Spleen (tissue), 13 donors: ENCODE measurements at regions of chr11 and their contacts with region 1.

Region 1: DNA sequence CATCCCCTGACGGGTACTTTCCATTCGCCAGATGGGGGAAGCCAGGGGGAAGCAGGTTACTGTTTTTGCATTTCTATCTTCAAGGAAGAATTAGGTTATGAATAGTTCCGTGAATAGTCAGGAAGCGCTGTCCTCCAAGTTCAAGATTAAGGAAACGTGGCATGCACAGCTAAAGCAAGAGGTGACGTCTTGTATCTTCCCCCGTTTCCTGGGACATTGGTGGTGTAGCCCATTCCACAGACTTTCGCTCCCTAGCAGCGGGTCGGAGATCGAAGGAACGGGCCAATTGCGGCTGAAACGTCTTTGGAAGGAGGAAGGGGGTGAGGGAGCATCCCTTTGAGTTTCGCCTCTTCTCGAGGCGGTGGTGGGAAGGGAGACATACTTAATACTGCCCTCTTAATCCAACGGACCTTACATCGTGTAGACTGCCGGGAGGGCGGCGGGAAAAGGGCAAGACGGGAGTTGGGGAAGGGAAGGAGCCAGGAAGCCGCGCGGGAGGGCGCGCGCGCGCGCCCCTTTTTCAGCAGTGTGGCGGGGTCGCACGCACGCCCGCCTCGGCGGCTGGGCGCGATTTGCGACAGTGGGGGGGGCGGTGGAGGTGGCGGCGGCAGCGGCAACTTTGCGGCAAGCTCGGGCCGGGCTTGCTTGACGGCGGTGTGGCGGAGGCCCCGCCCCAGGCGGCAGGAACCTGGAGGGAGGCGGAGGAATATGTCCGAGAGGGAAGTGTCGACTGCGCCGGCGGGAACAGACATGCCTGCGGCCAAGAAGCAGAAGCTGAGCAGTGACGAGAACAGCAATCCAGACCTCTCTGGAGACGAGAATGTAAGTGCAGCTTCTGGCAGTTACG is at the start of gene EED:
- DNase-seq: peak; percentile 99
- H3K4me3 ChIP-seq: peak within 1 kb of the TSS; percentile 69 to 90 (median 83)
- H3K27ac ChIP-seq: peak within 1 kb of the TSS; percentile 91 to 100 (median 98)
- H3K4me1 ChIP-seq: peaks cover 28 to 56% (median 51%) of the 10 kb centered on the region in 6 donors
- H3K27me3 ChIP-seq: no peaks in the 10 kb centered on the region
- CTCF ChIP-seq: peak in 2 of 11 experiments; percentile 18 to 28
- POLR2A ChIP-seq: peak in 1 of 3 donors; percentile 45
- total RNA-seq, gene EED: 25.8 to 48.1 (median 34.0) TPM

Region 2: DNA sequence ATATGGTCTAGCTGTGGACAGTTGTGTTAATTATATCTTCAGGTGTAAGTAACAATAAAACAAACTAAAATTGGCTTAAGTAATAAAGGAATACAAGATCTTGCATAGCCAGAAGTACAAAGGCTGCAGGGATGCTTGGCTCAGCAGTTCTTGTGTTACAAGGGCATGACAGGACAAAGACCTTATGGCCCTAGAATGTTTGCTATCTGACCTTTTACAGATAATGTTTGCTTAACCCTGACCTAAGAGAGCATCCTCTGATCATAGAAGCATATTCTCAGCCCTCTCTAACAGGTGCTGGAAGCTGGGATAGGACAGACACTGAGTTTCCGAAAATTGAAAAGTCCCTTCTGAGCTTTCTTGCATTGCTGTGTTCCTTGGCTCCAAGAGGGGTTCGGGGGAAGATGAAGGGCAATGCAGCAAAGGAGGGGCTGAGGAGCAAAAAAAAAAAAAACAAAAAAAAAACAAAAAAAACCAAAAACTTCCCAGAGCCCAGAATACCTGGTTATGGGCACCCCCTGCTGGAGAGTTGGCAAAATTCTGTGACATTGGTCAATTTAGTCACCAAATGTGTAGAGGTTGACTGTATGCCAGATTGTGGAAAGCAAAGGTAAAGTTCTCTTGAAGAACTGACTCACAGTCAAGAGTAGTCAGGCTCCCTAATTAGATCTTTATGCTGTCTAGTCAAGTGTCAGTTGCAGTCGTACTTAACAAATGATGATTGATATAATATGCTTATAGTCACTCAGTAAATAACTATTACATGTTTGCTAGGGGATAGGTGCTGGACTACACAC is 46.9 kb after region 1 on chr11:
- intact Hi-C with region 1: loop called (anchors 10 kb)
- DNase-seq: no peak
- H3K4me3 ChIP-seq: no peak overlapping the region
- H3K27ac ChIP-seq: no peak overlapping the region
- H3K4me1 ChIP-seq: peaks cover 0 to 42% (median 12%) of the 10 kb centered on the region in 6 donors
- H3K27me3 ChIP-seq: no peaks in the 10 kb centered on the region
- CTCF ChIP-seq: peak in 10 of 11 experiments; percentile 39 to 76 (median 62)
- POLR2A ChIP-seq: no peak